Activated T-helper 2 cell treated with anti-CD3 and anti-CD28 coated beads, Interferon-gamma antibody, Interleukin-2, Interleukin-4, amounts not matched to agents 10 μg/mL and 5 μg/mL and 100 μg/mL, durations not matched to agents 14 hours and 24 hours and 36 hours (primary cell): ENCODE measurements at regions of chr9 and their contacts with region 1.

Region 1: DNA sequence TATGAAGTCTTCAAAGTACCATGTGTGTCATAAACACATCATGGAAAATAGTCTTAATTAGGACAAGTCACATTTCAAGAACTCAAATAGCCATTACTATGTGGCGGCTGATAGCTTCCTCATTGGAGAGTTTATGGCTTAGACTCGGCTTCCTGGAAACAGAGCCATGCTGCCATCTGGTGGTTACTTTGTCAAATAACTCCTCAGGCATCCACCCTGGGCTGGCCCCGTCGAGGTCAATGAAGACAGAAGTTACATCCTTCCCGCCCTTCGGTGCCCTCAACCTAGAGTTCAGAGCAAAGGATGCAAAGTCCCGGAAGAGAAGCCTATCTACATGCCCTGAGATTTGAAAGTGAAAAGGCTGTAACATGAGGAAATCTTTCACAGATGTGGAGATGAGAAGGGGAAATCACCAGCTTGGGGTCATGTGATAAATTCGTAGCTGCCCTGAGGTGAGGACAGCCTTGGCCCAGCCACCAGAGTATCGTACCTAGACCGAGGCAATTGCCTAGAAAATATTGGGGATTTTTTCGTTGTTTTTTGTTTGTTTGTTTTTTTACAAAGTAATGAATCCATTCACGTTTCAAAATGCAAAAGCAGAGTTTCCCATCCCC is 45.5 kb upstream of the ZNF169 start:
- DNase-seq: peak; percentile 66
- H3K4me3 Mint-ChIP-seq: no peak overlapping the region
- H3K27ac Mint-ChIP-seq: no peak overlapping the region
- H3K4me1 Mint-ChIP-seq: peaks cover 4% of the 10 kb centered on the region
- H3K27me3 Mint-ChIP-seq: peaks cover 9% of the 10 kb centered on the region

Region 2: GRCh38 chr9:93682232-93682968 is 531.2 kb before region 1 on chr9:
- intact Hi-C with region 1: loop called (anchors 10 kb)
- DNase-seq: peak; percentile 43
- H3K4me3 Mint-ChIP-seq: no peak overlapping the region
- H3K27ac Mint-ChIP-seq: no peak overlapping the region
- H3K4me1 Mint-ChIP-seq: no peaks in the 10 kb centered on the region
- H3K27me3 Mint-ChIP-seq: peaks cover 6% of the 10 kb centered on the region

Region 3: DNA sequence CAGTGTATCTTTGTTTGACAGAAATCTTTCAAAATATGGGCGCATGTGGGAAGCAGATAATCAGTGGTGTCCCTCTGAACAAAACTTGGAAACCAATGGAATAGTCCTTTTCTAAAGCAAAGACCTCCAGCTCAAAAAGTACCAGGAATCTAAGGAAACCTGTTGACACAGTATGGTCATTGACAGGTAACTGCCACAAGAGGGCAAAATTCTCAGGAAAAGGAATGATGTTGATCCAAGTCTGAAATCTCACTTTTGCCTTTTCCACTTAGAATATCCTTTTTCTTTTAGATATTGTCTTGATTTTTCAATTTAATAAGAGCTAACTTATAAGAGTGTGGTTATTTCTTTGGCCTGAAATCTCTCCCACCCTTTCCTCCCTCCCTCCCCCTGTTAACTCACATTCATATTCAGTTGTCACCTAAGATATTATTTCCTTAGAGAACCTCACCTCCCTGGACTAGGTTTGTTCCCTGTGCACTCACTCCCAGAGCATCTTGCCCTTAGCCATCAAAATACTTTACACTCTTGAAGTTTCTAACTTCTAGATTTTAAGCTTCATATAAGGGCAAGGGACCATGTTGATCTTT is 199.5 kb before region 1 on chr9:
- intact Hi-C with region 1: loop called (anchors 5 kb)
- DNase-seq: no peak
- H3K4me3 Mint-ChIP-seq: no peak overlapping the region
- H3K27ac Mint-ChIP-seq: no peak overlapping the region
- H3K4me1 Mint-ChIP-seq: no peaks in the 10 kb centered on the region
- H3K27me3 Mint-ChIP-seq: peaks cover 6% of the 10 kb centered on the region

Region 4: DNA sequence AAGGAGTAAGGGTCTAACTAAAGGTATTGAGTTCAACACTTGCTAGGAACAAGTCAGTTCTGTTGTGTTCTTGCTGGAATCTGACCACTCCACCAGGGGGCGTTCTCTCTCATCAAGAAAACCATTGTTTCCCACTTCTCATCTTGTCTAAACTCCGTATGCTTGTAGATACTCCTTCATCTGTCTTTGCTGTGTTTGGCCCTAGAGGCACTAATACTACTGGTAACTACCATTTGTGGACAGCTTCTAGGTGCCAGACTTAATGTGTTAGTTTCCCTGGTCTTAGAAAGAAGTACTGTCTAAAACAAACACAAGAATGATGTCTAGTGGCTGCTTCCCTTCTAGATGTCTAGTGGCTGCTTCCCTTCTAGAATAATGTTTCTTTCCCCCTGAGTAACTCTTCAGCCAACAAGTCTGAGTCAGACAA is 148.1 kb before region 1 on chr9:
- intact Hi-C with region 1: loop called (anchors 1 kb)
- DNase-seq: peak; percentile 41
- H3K4me3 Mint-ChIP-seq: no peak overlapping the region
- H3K27ac Mint-ChIP-seq: no peak overlapping the region
- H3K4me1 Mint-ChIP-seq: peaks cover 2% of the 10 kb centered on the region
- H3K27me3 Mint-ChIP-seq: no peaks in the 10 kb centered on the region

Region 5: DNA sequence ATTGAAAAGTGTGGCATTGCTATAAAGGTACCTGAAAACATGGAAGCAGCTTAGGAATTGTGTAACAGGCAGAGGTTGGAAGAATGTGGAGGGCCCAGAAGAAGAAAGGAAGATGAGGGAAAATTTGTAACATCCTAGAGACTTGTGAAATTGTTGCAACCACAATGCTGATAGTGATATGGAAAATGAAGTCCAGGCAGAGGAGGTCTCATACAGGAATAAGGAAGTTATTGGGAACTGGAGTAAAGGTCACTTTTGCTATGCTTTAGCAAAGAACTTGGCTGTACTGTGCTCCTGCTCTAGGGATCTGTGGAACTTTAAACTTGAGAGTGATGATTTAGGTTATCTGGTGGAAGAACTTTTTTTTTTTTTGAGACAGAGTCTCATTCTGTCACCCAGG is 85.8 kb before region 1 on chr9:
- intact Hi-C with region 1: no loop called
- DNase-seq: no peak
- H3K4me3 Mint-ChIP-seq: no peak overlapping the region
- H3K27ac Mint-ChIP-seq: no peak overlapping the region
- H3K4me1 Mint-ChIP-seq: no peaks in the 10 kb centered on the region
- H3K27me3 Mint-ChIP-seq: peaks cover 2% of the 10 kb centered on the region